ENCODE measurements at regions of chr14 and their contacts with region 1.

Region 1: DNA sequence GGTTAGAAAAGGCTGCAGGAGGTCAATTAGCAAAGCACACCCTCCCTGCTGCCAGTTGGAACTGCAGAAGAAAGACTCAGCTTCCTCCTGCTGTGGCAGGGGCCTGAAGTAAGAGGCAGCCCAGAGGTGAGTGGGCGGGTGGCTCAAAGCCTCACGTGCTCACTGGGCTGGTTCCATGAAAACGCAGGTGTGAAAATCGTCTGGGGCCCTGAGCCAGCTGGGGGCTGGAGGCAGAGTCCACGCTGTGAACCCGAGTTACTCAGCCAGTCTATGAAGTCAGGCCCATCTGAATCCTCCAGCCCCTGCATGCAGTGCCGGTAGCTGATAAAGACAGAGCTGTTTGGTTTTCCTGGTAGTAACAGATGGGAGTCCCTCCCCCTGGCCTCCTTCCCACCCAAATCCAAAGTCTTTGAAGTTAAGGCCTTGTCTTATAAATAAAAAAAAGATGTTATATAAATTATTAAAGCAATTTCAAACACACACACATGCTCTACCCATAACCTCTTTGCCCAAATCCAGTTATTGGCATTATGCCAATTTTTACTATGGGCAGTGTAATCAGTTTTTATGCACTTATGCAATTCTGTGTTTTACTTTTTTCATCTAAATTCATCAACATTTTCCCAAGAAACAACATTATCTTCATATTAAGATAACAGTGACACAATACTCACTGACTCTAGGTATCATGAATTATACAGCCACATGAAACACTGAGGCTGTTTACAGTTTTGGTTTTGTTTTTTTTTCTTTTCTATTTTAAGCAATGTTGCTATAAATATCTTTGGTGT is 57.9 kb upstream of the PNMA1 start:
- DNase-seq: peak; percentile 68
- H3K4me3 Mint-ChIP-seq: peak overlapping the region; percentile 42
- H3K27ac Mint-ChIP-seq: peak overlapping the region; percentile 88
- H3K4me1 Mint-ChIP-seq: peaks cover 72% of the 10 kb centered on the region
- H3K27me3 Mint-ChIP-seq: no peaks in the 10 kb centered on the region

Region 2: GRCh38 chr14:73785873-73786695 is 14.0 kb after region 1 on chr14:
- CTCF ChIA-PET with region 1: interaction called, 11 read pairs
- POLR2A ChIA-PET with region 1: interaction called, 12 read pairs
- DNase-seq: peak; percentile 76
- H3K4me3 Mint-ChIP-seq: peak overlapping the region; percentile 87
- H3K27ac Mint-ChIP-seq: peak overlapping the region; percentile 95
- H3K4me1 Mint-ChIP-seq: peaks cover 61% of the 10 kb centered on the region
- H3K27me3 Mint-ChIP-seq: no peaks in the 10 kb centered on the region